Naive thymus-derived CD8-positive, alpha-beta T cell (primary cell): ENCODE measurements at regions of chr1 and their contacts with region 1.

Region 1: DNA sequence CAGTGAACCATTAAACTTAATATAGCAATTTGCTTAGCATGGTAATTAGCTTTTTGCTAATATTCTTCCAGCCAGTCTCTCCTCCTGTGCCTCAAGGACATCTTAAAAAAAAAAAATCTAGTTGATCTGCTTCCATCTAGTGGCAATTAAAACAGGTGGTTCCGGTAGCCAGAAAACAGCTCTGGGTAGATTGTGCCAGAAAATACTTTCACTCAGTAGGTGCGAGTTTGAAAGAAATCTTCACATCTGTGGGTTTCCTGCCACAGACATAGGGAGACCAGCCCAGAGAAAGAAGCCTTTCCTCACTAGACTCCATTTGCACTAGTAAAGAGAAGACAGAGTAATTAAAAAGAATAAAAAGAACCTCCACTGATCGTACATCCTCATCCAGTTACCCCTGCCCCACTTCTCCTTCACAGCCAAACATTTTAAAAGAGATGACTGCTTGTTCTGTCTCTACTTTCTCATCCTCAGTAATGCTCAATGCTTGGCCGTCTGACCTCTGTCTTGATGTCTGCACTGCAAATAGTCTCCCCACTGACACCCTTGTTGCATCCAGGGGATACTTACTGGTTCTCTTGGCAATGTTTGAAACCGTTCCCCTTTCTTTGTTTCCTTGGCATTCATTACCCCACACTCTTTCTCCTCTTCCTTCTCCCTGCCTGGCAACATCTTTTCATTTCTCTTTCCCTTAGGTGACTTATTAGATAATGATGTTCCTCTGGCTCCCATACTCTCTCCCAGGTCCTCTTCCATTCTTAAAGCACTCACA is 16.9 kb downstream of the SELL start:
- DNase-seq: peak in 9 of 10 donors; percentile 27 to 81 (median 66)
- ATAC-seq: peak; percentile 62 to 68
- H3K4me3 Mint-ChIP-seq: peak overlapping the region; percentile 52 to 86 (median 66)
- H3K27ac Mint-ChIP-seq: peak overlapping the region in 4 of 10 donors; percentile 86 to 96 (median 94)
- H3K4me1 Mint-ChIP-seq: peaks cover 55 to 91% (median 67%) of the 10 kb centered on the region in 4 donors
- H3K27me3 Mint-ChIP-seq: no peaks in the 10 kb centered on the region

Region 2: GRCh38 chr1:169680377-169681019 is 14.0 kb before region 1 on chr1:
- POLR2A ChIA-PET with region 1: interaction called, 111 read pairs
- DNase-seq: no peak
- ATAC-seq: peak; percentile 45 to 59
- H3K4me3 Mint-ChIP-seq: peak overlapping the region in 9 of 10 donors; percentile 20 to 76 (median 52)
- H3K27ac Mint-ChIP-seq: peak overlapping the region; percentile 0 to 95 (median 72)
- H3K4me1 Mint-ChIP-seq: peaks cover 26 to 66% (median 58%) of the 10 kb centered on the region in 4 donors
- H3K27me3 Mint-ChIP-seq: no peaks in the 10 kb centered on the region

Region 3: GRCh38 chr1:169711469-169712281 is 17.2 kb after region 1 on chr1 and contains the start of gene SELL:
- POLR2A ChIA-PET with region 1: interaction called, 139 read pairs
- DNase-seq: peak; percentile 44 to 88 (median 76)
- ATAC-seq: peak; percentile 72 to 75
- H3K4me3 Mint-ChIP-seq: peak within 1 kb of the TSS; percentile 88 to 98 (median 96)
- H3K27ac Mint-ChIP-seq: peak within 1 kb of the TSS in 9 of 10 donors; percentile 88 to 97 (median 94)
- H3K4me1 Mint-ChIP-seq: peaks cover 13 to 26% (median 22%) of the 10 kb centered on the region in 4 donors
- H3K27me3 Mint-ChIP-seq: no peaks in the 10 kb centered on the region
- polyA plus RNA-seq, gene SELL: 1,427 to 2,162 (median 1,901) TPM